Heart left ventricle (tissue), 16 donors: ENCODE measurements at regions of chr1 and their contacts with region 1.

Region 1: DNA sequence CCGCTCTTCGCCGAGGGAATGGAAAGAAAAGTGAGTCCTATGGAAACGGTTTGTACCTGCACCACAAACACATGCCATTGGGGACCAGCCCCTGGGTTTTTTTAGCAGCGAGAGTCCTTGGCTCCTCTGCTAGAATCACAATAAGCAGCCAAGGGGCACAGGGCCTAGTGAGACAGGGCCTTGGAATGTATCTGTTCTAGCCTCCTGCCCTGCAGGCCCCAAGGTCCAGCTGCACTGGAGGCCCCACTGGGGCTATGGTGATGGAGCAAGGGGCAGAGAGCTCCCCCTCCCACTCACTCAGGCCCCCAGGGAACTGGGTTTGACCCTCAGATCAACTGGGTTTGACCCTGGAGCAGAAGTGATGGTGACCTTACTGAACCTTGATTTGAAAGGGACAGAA is 14.4 kb downstream of the SHISA4 start:
- DNase-seq: peak in 1 of 5 donors; percentile 53
- ATAC-seq: peak in 2 of 4 donors; percentile 39 to 49
- H3K4me3 ChIP-seq: no peak overlapping the region
- H3K27ac ChIP-seq: peak overlapping the region in 7 of 12 donors; percentile 18 to 92 (median 69)
- H3K4me1 ChIP-seq: peaks cover 0 to 54% (median 11%) of the 10 kb centered on the region in 12 donors
- H3K27me3 ChIP-seq: no peaks in the 10 kb centered on the region
- CTCF ChIP-seq: no peak
- POLR2A ChIP-seq: no peak

Region 2: DNA sequence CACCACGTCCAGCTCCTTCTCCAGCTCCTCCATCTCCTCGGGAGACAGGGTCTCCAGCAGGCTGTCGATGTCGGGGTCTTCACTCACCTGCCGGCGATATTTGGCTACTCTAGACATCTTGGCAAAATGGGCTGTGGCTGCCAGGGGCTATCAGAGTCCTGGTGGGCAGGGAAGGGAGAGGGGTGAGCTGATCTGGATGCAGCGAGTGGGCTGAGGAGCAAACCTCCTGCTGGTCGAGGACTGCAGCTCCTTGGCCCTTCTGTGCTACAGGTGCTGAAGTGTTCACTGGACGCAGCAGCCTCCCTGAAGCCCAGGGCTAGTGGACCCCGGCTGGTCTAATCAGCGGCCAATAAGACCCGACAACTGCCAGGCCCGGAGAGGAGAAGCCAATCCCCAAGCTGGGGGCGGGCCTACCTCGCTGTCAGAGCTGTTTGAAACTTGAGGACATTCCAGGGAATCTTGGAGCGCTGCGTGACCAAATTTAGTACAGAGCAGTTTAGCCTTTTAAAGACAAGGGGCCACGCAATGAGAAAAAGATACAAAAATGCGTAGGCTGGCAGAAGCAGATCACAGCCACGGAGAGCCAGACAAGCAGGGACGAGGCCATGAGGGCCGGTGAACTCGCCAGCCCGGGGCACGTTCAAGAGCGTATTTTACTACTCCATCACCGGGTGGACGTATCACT is 43.2 kb after region 1 on chr1 and contains the start of gene LMOD1:
- intact Hi-C with region 1: loop called in 5 of 10 experiments (anchors 2 to 10 kb)
- DNase-seq: peak; percentile 83 to 89 (median 85)
- ATAC-seq: peak; percentile 91 to 96 (median 93)
- H3K4me3 ChIP-seq: peak within 1 kb of the TSS; percentile 26 to 81 (median 54)
- H3K27ac ChIP-seq: peak within 1 kb of the TSS; percentile 8 to 89 (median 62)
- H3K4me1 ChIP-seq: peaks cover 0 to 20% (median 4%) of the 10 kb centered on the region in 12 donors
- H3K27me3 ChIP-seq: peaks cover 0 to 35% (median 0%) of the 10 kb centered on the region in 9 donors
- CTCF ChIP-seq: no peak
- POLR2A ChIP-seq: peak in 1 of 2 donors; percentile 59
- total RNA-seq, gene LMOD1: 4.6 to 24.9 (median 10.0) TPM